ENCODE measurements at regions of chr21 and their contacts with region 1.

Region 1: GRCh38 chr21:30340441-30341241 is 3.1 kb upstream of the KRTAP27-1 start:
- DNase-seq: peak; percentile 51
- H3K4me3 ChIP-seq: no peak overlapping the region
- H3K27ac ChIP-seq: no peak overlapping the region
- H3K4me1 ChIP-seq: no peaks in the 10 kb centered on the region
- H3K27me3 ChIP-seq: no peaks in the 10 kb centered on the region
- CTCF ChIP-seq: peak; percentile 75

Region 2: GRCh38 chr21:30382201-30382600 is 41.6 kb after region 1 on chr21:
- intact Hi-C with region 1: no loop called
- DNase-seq: no peak
- H3K4me3 ChIP-seq: no peak overlapping the region
- H3K27ac ChIP-seq: no peak overlapping the region
- H3K4me1 ChIP-seq: no peaks in the 10 kb centered on the region
- H3K27me3 ChIP-seq: no peaks in the 10 kb centered on the region
- CTCF ChIP-seq: no peak

Region 3: GRCh38 chr21:30408782-30409494 is 68.3 kb after region 1 on chr21:
- intact Hi-C with region 1: loop called (anchors 5 kb)
- DNase-seq: peak; percentile 65
- H3K4me3 ChIP-seq: no peak overlapping the region
- H3K27ac ChIP-seq: no peak overlapping the region
- H3K4me1 ChIP-seq: no peaks in the 10 kb centered on the region
- H3K27me3 ChIP-seq: no peaks in the 10 kb centered on the region
- CTCF ChIP-seq: peak; percentile 51

Region 4: DNA sequence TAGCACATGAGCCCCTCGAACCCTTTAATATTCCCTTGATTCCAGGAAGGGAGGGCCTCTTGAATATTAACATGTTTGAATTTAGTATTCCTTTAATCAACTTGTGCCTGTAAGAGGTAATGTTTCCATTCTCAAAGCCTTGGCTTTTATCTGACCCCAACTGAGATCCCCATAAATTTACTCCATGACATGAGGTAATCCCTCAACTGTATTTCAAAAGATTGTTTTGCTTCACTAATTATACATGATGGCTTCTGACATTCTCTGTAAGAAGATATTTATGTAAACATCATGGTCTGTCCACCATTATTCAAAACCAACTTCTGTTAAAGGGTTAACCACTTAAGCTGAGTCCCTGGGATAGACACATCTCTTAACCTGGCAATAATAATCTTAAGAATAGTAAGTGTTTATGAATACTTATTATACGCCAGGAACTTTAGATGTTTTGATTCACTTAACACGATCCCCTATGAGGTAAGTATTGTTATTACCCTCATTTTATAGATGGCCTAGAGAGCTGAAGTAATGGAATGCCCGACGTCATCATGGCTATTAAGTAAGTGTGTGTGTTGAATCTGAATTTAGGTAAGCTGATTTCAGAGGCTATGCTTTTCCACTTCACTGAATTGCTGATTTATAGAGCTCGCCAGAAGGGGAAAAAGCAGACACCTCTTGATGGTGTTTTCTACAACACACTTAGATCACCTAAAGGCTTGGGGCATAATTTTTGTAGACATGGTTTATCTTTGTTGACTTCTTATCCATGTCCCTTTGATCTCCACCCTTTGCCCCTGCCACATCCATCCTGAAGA is 128.5 kb after region 1 on chr21:
- intact Hi-C with region 1: no loop called
- DNase-seq: no peak
- H3K4me3 ChIP-seq: no peak overlapping the region
- H3K27ac ChIP-seq: no peak overlapping the region
- H3K4me1 ChIP-seq: no peaks in the 10 kb centered on the region
- H3K27me3 ChIP-seq: no peaks in the 10 kb centered on the region
- CTCF ChIP-seq: no peak

Measured in colonic mucosa (tissue), 4 donors.